AG04450 (cell line): ENCODE measurements at regions of chr14 and their contacts with region 1.

Region 1: GRCh38 chr14:70907176-70907995 is at the start of gene PCNX1:
- DNase-seq: peak; percentile 44
- H3K4me3 ChIP-seq: peak within 1 kb of the TSS; percentile 89
- H3K27ac ChIP-seq: peak within 1 kb of the TSS; percentile 77
- H3K27me3 ChIP-seq: no peaks in the 10 kb centered on the region
- CTCF ChIP-seq: peak; percentile 72
- polyA plus RNA-seq, gene PCNX1: 47.1 and 54.2 TPM in 2 replicates

Region 2: DNA sequence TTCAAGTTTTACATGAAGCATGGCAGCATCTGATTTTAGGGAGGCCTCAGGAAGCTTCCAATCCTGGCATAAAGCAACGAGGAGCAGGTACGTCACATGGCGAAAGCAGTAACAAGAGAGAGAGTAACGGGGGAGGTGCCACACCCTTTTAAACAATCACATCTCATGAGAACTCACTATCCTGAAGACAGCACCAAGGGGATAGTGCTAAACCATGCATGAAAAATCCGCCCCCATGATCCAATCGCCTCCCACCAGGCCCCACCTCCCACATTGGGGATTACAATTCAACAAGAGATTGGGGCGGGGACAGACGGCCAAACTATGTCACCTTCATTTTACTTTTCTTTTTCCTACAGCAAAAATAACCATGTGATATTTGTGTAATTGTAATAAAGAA is 90.9 kb before region 1 on chr14:
- CTCF ChIA-PET with region 1: interaction called, 66 read pairs
- POLR2A ChIA-PET with region 1: interaction called, 8 read pairs
- DNase-seq: no peak
- H3K4me3 ChIP-seq: no peak overlapping the region
- H3K27ac ChIP-seq: no peak overlapping the region
- H3K27me3 ChIP-seq: peaks cover 10% of the 10 kb centered on the region
- CTCF ChIP-seq: no peak

Region 3: DNA sequence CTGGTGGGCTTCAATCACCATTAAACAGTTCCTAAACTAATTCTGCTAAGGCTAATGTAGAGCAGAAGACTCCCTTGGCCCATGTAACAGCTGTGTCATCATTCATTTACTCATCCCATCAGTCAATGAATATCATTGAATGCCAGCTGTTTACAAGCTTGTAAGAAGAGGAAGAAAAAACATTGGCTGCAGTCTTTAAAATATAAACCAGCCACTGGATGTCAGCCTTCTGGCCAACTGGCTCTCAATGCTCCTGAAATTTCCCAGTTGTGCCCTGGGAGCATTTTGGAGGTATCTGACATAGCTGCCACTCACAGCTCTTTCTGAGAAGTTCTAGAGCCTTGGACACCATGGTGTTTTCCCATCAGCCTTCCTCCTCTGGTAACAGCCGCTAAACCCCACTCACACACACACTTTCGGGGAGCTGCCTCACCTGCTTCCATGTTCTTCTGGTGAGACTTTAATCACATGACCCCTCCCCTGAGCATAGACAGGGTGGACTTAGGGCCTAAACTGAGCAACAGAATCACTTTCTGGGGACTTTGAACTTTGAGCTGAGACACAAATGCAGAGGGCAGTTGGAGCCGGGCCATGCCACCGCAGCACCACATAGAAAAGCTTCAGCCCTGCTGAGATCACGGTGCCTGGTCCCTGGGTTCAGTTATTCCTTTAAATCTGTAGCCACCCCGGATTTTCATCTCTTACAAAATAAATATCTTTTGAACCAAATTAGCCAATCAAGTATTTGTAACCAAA is 79.8 kb before region 1 on chr14:
- CTCF ChIA-PET with region 1: interaction called, 28 read pairs
- POLR2A ChIA-PET with region 1: no interaction called
- DNase-seq: no peak
- H3K4me3 ChIP-seq: no peak overlapping the region
- H3K27ac ChIP-seq: no peak overlapping the region
- H3K27me3 ChIP-seq: peaks cover 2% of the 10 kb centered on the region
- CTCF ChIP-seq: no peak

Region 4: DNA sequence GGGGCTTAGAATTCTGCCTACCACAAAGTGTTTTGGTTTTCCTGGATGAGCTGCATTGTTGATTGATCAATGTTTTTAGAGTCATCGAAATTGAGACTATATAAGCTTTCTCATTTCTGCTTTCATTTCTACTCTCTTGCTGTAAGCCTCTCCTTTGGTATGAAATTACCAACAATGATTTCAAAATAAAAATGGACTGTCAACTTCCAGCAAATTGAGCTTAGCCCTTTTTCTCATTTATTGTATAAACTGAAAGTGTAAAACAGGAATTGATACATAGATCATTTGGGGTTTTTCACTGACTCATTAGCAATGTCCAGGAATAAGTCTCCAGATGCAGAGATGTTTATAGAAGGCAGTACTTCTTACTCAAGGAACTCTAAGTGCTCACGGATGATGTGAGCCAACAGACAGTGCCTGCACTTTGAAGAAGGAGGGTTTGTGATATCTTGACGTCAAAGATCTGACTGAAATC is 20.1 kb before region 1 on chr14:
- CTCF ChIA-PET with region 1: interaction called, 44 read pairs
- POLR2A ChIA-PET with region 1: interaction called, 7 read pairs
- DNase-seq: peak; percentile 86
- H3K4me3 ChIP-seq: peak overlapping the region; percentile 34
- H3K27ac ChIP-seq: peak overlapping the region; percentile 54
- H3K27me3 ChIP-seq: no peaks in the 10 kb centered on the region
- CTCF ChIP-seq: no peak

Region 5: DNA sequence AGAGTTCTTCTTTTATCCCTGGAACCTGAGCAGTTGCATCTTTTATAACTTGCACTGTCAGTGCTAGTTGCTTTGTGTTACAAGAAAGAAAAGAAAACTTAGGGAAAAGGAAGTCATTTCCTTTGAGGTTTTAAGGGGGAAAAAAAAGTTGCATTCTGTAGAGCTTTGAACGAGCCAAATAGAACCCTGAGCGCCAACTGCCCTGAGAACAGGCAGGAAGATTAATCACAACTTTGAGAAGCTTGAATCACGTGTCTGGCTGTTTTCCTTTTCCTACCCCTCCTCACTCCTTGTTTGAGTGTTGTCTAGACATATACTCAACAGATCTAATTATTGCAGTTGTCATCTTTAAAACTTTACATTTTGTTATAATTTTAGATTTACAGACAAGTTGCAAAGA is 12.4 kb after region 1 on chr14:
- CTCF ChIA-PET with region 1: interaction called, 11 read pairs
- POLR2A ChIA-PET with region 1: no interaction called
- DNase-seq: no peak
- H3K4me3 ChIP-seq: no peak overlapping the region
- H3K27ac ChIP-seq: no peak overlapping the region
- H3K27me3 ChIP-seq: no peaks in the 10 kb centered on the region
- CTCF ChIP-seq: no peak

Region 6: DNA sequence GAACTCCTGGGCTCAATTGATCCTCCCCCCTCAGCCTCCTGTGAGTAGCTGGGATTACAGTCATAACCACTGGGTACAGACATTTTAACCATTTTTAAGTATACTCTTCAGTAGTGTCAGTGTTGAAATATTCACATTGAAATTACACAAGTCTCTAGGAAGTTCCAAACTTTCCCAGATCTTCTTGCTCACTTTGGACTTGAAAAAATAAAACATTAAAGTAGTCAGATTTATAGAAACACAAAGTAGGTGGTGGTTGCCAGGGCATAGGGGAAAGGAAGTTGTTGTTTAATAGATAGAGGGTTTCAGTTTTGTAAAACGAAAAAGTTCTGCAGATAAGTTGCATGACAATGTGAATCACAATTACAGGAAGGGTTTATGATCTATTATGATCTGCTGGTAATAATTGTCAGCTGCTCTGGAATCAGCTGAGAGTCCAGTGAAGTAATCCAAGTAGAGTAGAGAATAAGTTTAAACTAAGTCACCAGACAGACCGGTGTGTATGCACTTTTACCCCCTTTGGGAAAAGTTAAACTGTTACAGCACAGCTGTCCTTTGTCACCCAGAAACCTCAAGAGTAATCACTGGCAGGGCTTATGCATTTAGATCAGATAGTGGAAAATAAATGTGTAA is 27.2 kb after region 1 on chr14:
- CTCF ChIA-PET with region 1: interaction called, 15 read pairs
- POLR2A ChIA-PET with region 1: interaction called, 4 read pairs
- DNase-seq: peak; percentile 13
- H3K4me3 ChIP-seq: no peak overlapping the region
- H3K27ac ChIP-seq: peak overlapping the region; percentile 52
- H3K27me3 ChIP-seq: no peaks in the 10 kb centered on the region
- CTCF ChIP-seq: no peak

Region 7: GRCh38 chr14:70955543-70956480 is 48.4 kb after region 1 on chr14:
- CTCF ChIA-PET with region 1: interaction called, 28 read pairs
- POLR2A ChIA-PET with region 1: no interaction called
- DNase-seq: peak; percentile 7
- H3K4me3 ChIP-seq: no peak overlapping the region
- H3K27ac ChIP-seq: no peak overlapping the region
- H3K27me3 ChIP-seq: no peaks in the 10 kb centered on the region
- CTCF ChIP-seq: peak; percentile 78